Naive thymus-derived CD4-positive, alpha-beta T cell (primary cell): ENCODE measurements at regions of chr9 and their contacts with region 1.

Region 1: GRCh38 chr9:114155263-114155972 is at the start of gene COL27A1:
- DNase-seq: peak; percentile 38 to 90 (median 71)
- ATAC-seq: peak; percentile 91
- H3K4me3 ChIP-seq: peak within 1 kb of the TSS; percentile 40
- H3K4me3 Mint-ChIP-seq: peak within 1 kb of the TSS; percentile 88 to 98 (median 91)
- H3K27ac ChIP-seq: no peak within 1 kb of the TSS
- H3K27ac Mint-ChIP-seq: peak within 1 kb of the TSS in 7 of 9 donors; percentile 24 to 66 (median 62)
- H3K4me1 ChIP-seq: peaks cover 0 to 13% of the 10 kb centered on the region in 2 donors
- H3K4me1 Mint-ChIP-seq: peaks cover 15 to 32% (median 24%) of the 10 kb centered on the region in 7 donors
- H3K27me3 ChIP-seq: peaks cover 0 to 4% of the 10 kb centered on the region in 2 donors
- H3K27me3 Mint-ChIP-seq: peaks cover 31 to 54% (median 45%) of the 10 kb centered on the region in 5 donors
- total RNA-seq, gene COL27A1: 1.2 to 2.4 (median 1.9) TPM

Region 2: DNA sequence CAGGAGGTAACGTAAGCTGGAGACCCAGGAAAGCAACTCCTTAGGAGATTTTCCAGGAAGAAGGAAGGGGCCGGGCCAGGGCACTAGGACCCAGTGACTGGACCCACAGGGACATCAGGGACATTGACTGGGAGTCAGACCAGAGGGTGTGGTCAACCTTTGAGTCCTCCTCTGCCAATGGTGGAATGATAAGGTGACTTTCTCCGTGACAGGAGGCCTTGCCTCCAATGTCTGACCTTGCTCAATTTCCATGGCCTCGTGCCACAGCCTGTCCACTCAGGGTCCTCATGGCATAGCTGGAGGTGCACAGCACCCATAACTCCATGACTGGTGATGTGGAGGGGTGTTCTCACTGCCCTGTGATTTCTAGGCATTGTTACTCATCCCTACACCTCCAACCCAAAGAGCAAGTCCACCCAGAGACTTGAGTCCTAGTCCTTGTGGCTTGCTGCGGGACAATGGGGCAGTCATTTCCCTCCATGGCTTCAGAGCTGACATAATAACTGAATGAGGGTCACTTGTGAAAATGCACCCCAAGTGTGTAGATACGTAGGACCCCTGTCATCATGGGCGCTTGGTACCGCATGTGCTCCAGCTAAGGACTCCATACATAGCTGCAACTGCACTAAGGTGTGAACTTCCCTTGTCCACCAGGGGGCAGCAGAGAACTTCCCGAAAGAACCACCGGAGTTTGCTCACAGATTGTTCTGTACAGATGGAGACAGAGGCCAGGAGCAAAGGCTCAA is 73.2 kb before region 1 on chr9:
- CTCF ChIA-PET with region 1: interaction called, 3 read pairs
- POLR2A ChIA-PET with region 1: no interaction called
- intact Hi-C with region 1: loop called in 1 of 2 experiments (anchors 1 kb)
- DNase-seq: peak; percentile 42 to 79 (median 67)
- ATAC-seq: peak; percentile 75
- H3K4me3 ChIP-seq: no peak overlapping the region
- H3K4me3 Mint-ChIP-seq: no peak overlapping the region
- H3K27ac ChIP-seq: no peak overlapping the region
- H3K27ac Mint-ChIP-seq: no peak overlapping the region
- H3K4me1 ChIP-seq: no peaks in the 10 kb centered on the region
- H3K4me1 Mint-ChIP-seq: peaks cover 0 to 4% (median 0%) of the 10 kb centered on the region in 7 donors
- H3K27me3 ChIP-seq: no peaks in the 10 kb centered on the region
- H3K27me3 Mint-ChIP-seq: peaks cover 0 to 4% (median 3%) of the 10 kb centered on the region in 5 donors

Region 3: DNA sequence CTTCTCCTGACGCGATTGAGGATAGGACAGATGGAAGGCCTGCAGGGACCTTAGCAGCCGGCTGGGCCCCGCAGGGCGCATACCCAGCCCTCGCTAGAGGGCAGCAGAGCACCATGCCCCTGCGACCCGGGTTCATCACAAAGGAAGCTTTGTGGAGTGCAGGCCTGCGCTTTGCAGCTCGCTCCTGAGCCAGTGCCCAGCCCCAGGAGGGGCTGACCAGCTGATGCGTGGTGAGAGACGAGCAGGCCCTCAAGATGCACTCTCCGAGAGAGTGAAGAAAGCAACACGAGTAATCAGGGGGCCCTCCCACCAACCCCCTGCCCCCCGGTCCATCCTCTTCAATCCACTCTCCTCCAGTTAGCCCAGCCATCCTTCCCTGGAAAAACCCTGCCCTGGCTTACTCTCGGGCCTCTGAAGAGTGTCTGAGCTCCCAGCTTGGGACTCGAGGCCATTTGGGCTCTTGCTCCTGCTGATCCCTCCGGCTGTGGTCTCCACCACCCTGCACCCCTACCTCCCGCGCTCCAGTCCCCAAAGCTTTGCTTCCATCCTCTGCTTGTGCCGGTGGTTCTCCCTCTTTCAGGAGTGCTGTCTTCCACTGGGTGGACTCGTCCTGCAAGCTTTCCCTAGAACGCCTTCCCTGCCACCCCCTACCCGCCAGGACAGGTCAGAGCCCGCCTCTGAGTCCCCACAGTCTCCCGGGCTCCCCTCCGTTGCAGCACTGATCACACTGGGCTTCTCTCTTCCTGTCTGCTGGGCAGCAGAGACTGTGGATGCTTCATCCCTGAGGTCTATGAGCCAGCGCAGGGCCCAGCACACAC is 47.2 kb before region 1 on chr9:
- CTCF ChIA-PET with region 1: interaction called, 5 read pairs
- POLR2A ChIA-PET with region 1: no interaction called
- intact Hi-C with region 1: loop called in 1 of 2 experiments (anchors 5 kb)
- DNase-seq: peak in 8 of 9 donors; percentile 10 to 70 (median 32)
- ATAC-seq: peak; percentile 74
- H3K4me3 ChIP-seq: no peak overlapping the region
- H3K4me3 Mint-ChIP-seq: no peak overlapping the region
- H3K27ac ChIP-seq: no peak overlapping the region
- H3K27ac Mint-ChIP-seq: peak overlapping the region in 1 of 9 donors; percentile 78
- H3K4me1 ChIP-seq: no peaks in the 10 kb centered on the region
- H3K4me1 Mint-ChIP-seq: peaks cover 0 to 3% (median 0%) of the 10 kb centered on the region in 7 donors
- H3K27me3 ChIP-seq: no peaks in the 10 kb centered on the region
- H3K27me3 Mint-ChIP-seq: peaks cover 3 to 23% (median 11%) of the 10 kb centered on the region in 5 donors

Region 4: GRCh38 chr9:114169029-114169951 is 13.9 kb after region 1 on chr9:
- CTCF ChIA-PET with region 1: no interaction called
- POLR2A ChIA-PET with region 1: no interaction called
- intact Hi-C with region 1: no loop called
- DNase-seq: no peak
- ATAC-seq: no peak
- H3K4me3 ChIP-seq: no peak overlapping the region
- H3K4me3 Mint-ChIP-seq: no peak overlapping the region
- H3K27ac ChIP-seq: no peak overlapping the region
- H3K27ac Mint-ChIP-seq: no peak overlapping the region
- H3K4me1 ChIP-seq: no peaks in the 10 kb centered on the region
- H3K4me1 Mint-ChIP-seq: no peaks in the 10 kb centered on the region
- H3K27me3 ChIP-seq: no peaks in the 10 kb centered on the region
- H3K27me3 Mint-ChIP-seq: no peaks in the 10 kb centered on the region

Region 5: GRCh38 chr9:114233491-114234185 is 78.2 kb after region 1 on chr9:
- CTCF ChIA-PET with region 1: no interaction called
- POLR2A ChIA-PET with region 1: no interaction called
- intact Hi-C with region 1: no loop called
- DNase-seq: no peak
- ATAC-seq: no peak
- H3K4me3 ChIP-seq: no peak overlapping the region
- H3K4me3 Mint-ChIP-seq: no peak overlapping the region
- H3K27ac ChIP-seq: no peak overlapping the region
- H3K27ac Mint-ChIP-seq: no peak overlapping the region
- H3K4me1 ChIP-seq: no peaks in the 10 kb centered on the region
- H3K4me1 Mint-ChIP-seq: peaks cover 0 to 8% (median 0%) of the 10 kb centered on the region in 7 donors
- H3K27me3 ChIP-seq: no peaks in the 10 kb centered on the region
- H3K27me3 Mint-ChIP-seq: peaks cover 0 to 7% (median 0%) of the 10 kb centered on the region in 5 donors

Region 6: GRCh38 chr9:114291064-114291474 is 135.7 kb after region 1 on chr9:
- CTCF ChIA-PET with region 1: interaction called, 6 read pairs
- POLR2A ChIA-PET with region 1: no interaction called
- intact Hi-C with region 1: loop called (anchors 1 kb)
- DNase-seq: peak; percentile 30 to 73 (median 57)
- ATAC-seq: peak; percentile 65
- H3K4me3 ChIP-seq: no peak overlapping the region
- H3K4me3 Mint-ChIP-seq: no peak overlapping the region
- H3K27ac ChIP-seq: no peak overlapping the region
- H3K27ac Mint-ChIP-seq: peak overlapping the region in 1 of 9 donors; percentile 20
- H3K4me1 ChIP-seq: no peaks in the 10 kb centered on the region
- H3K4me1 Mint-ChIP-seq: peaks cover 0 to 5% (median 0%) of the 10 kb centered on the region in 7 donors
- H3K27me3 ChIP-seq: no peaks in the 10 kb centered on the region
- H3K27me3 Mint-ChIP-seq: peaks cover 2 to 7% (median 5%) of the 10 kb centered on the region in 5 donors

Region 7: DNA sequence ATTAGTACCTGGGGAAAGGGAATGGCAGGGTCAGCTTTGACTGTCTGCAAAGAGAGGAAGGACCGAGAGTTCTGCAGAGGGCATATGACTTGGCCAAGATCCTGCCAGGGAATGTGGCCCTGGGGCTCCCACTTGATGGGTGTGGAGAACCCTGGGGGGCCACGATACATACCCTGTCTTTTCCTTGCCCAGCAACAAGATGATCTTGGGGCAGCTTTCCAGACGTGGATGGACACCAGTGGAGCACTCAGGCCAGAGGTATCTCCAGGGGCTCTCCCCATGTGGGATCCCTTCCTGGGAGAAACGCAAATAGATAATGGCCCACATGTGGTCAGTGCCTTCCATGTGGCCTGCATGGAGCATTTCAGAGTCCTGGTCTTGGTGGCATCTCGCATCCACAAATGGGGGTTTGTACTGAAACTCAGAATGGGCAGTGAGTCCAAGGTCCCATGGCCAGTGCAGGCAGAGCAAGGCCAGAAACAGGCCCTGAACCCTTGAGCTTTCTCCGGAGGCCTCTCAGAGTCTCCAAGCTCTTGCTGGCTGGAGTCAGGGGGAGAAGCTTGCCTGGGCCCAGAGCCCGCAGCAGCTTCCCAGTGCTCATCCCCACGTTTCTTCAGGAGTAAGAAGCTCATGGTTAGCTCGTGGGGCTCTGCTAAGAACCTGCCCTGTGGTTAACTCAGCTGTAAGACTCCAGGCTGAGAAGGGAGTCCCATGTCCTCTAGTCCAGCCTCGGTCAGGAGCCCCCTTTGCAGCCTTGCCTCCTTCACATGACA is 149.2 kb after region 1 on chr9:
- CTCF ChIA-PET with region 1: interaction called, 3 read pairs
- POLR2A ChIA-PET with region 1: no interaction called
- intact Hi-C with region 1: loop called in 1 of 2 experiments (anchors 1 kb)
- DNase-seq: peak in 1 of 9 donors; percentile 17
- ATAC-seq: no peak
- H3K4me3 ChIP-seq: no peak overlapping the region
- H3K4me3 Mint-ChIP-seq: no peak overlapping the region
- H3K27ac ChIP-seq: no peak overlapping the region
- H3K27ac Mint-ChIP-seq: no peak overlapping the region
- H3K4me1 ChIP-seq: no peaks in the 10 kb centered on the region
- H3K4me1 Mint-ChIP-seq: peaks cover 0 to 16% (median 4%) of the 10 kb centered on the region in 7 donors
- H3K27me3 ChIP-seq: no peaks in the 10 kb centered on the region
- H3K27me3 Mint-ChIP-seq: no peaks in the 10 kb centered on the region

Region 8: GRCh38 chr9:114420581-114420980 is 265.2 kb after region 1 on chr9:
- CTCF ChIA-PET with region 1: no interaction called
- POLR2A ChIA-PET with region 1: no interaction called
- intact Hi-C with region 1: no loop called
- DNase-seq: no peak
- ATAC-seq: no peak
- H3K4me3 ChIP-seq: no peak overlapping the region
- H3K4me3 Mint-ChIP-seq: no peak overlapping the region
- H3K27ac ChIP-seq: no peak overlapping the region
- H3K27ac Mint-ChIP-seq: no peak overlapping the region
- H3K4me1 ChIP-seq: no peaks in the 10 kb centered on the region
- H3K4me1 Mint-ChIP-seq: peaks cover 0 to 21% (median 0%) of the 10 kb centered on the region in 7 donors
- H3K27me3 ChIP-seq: no peaks in the 10 kb centered on the region
- H3K27me3 Mint-ChIP-seq: no peaks in the 10 kb centered on the region